BJ (cell line): ENCODE measurements at regions of chr21 and their contacts with region 1.

Region 1: GRCh38 chr21:29372063-29372802 is 73.5 kb downstream of the BACH1 start:
- DNase-seq: no peak
- H3K4me3 ChIP-seq: no peak overlapping the region
- H3K27me3 ChIP-seq: no peaks in the 10 kb centered on the region
- CTCF ChIP-seq: peak; percentile 59

Region 2: DNA sequence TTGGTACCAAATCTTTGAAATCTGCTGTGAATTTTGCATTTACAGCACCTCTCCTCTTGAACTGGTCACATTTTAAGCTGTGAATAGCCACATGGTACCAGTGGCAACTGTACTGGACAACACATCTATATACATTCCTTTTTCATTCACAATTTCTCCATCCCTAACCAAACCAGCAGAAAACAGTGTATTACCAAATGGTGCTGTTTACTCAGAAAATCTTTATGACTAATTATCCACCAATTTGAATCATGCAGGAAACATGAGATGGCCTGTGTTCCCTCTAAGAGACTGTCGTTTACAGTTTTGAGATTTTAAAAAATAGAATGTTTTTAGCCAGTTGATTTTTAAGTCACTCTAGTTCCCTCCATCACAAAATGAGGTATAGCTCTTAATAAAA is 281.2 kb before region 1 on chr21:
- CTCF ChIA-PET with region 1: interaction called, 26 read pairs
- POLR2A ChIA-PET with region 1: no interaction called
- DNase-seq: peak; percentile 61
- H3K4me3 ChIP-seq: no peak overlapping the region
- H3K27me3 ChIP-seq: no peaks in the 10 kb centered on the region
- CTCF ChIP-seq: no peak

Region 3: DNA sequence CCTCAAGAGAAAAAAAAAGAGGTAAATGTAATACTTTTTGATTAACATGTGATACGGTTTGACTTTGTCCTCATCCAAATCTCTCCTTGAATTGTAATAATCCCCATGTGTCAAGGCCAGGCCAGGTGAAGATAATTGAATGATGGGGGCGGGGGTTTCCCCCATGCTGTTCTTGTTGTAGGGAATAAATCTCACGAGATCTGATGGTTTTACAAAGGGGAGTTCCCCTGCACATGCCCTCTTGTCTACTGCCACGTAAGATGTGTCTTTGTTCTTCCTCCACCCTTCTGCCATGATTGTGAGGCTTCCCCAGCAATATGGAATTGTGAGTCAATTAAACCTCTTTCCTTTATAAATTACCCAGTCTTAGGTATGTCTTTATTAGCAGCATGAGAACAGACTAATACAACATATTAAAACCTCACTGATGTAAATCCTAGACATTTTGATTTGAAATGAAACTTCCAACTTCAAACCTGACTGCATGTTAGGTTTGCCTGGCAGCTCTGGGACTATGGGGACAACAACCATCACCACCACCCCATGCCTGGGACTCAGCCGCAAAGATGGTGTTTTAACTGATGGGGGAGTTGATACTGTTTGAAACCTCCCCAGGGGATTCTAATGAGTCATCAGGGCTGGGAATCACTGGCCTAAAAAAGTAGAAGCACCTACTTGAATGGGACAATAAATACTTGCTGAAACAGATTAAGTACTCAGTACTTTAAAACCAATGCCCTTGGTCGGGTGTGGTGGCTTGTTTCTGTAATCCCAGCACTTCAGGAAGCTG is 106.3 kb before region 1 on chr21:
- CTCF ChIA-PET with region 1: no interaction called
- POLR2A ChIA-PET with region 1: no interaction called
- DNase-seq: no peak
- H3K4me3 ChIP-seq: no peak overlapping the region
- H3K27me3 ChIP-seq: no peaks in the 10 kb centered on the region
- CTCF ChIP-seq: no peak

Region 4: GRCh38 chr21:29298348-29299045 is 73.7 kb before region 1 on chr21 and contains the start of gene BACH1:
- CTCF ChIA-PET with region 1: interaction called, 12 read pairs
- POLR2A ChIA-PET with region 1: no interaction called
- DNase-seq: no peak
- H3K4me3 ChIP-seq: peak within 1 kb of the TSS; percentile 91
- H3K27me3 ChIP-seq: no peaks in the 10 kb centered on the region
- CTCF ChIP-seq: 0 out of 2 replicates have a peak, but pooled peaks have one; percentile 7
- polyA plus RNA-seq, gene BACH1: 22.7 and 37.7 TPM in 2 replicates

Region 5: DNA sequence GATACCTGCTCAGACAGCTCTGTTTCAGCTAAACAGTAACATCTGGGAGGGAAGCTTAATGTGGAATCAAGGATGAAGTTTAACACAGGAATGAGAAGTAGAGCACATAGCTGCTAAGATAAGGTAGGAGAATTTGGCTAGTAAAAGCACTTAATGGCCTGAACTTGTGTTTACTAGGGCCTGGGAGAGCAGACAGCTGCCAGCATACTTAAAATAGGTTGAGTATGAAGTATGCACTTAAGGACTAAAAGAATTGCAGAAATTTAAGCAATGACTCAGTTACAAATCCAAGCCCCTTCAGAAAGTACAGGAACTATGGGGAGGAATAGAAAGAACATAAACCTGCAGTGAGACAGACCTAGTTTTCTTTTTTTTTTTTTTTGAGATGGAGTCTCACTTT is 20.5 kb before region 1 on chr21:
- CTCF ChIA-PET with region 1: interaction called, 14 read pairs
- POLR2A ChIA-PET with region 1: no interaction called
- DNase-seq: peak; percentile 87
- H3K4me3 ChIP-seq: no peak overlapping the region
- H3K27me3 ChIP-seq: no peaks in the 10 kb centered on the region
- CTCF ChIP-seq: no peak

Region 6: GRCh38 chr21:29360799-29361765 is 11.2 kb before region 1 on chr21:
- CTCF ChIA-PET with region 1: interaction called, 20 read pairs
- POLR2A ChIA-PET with region 1: no interaction called
- DNase-seq: no peak
- H3K4me3 ChIP-seq: no peak overlapping the region
- H3K27me3 ChIP-seq: no peaks in the 10 kb centered on the region
- CTCF ChIP-seq: no peak

Region 7: GRCh38 chr21:29386820-29387219 is 14.6 kb after region 1 on chr21:
- CTCF ChIA-PET with region 1: no interaction called
- POLR2A ChIA-PET with region 1: no interaction called
- DNase-seq: no peak
- H3K4me3 ChIP-seq: no peak overlapping the region
- H3K27me3 ChIP-seq: no peaks in the 10 kb centered on the region
- CTCF ChIP-seq: no peak

Region 8: DNA sequence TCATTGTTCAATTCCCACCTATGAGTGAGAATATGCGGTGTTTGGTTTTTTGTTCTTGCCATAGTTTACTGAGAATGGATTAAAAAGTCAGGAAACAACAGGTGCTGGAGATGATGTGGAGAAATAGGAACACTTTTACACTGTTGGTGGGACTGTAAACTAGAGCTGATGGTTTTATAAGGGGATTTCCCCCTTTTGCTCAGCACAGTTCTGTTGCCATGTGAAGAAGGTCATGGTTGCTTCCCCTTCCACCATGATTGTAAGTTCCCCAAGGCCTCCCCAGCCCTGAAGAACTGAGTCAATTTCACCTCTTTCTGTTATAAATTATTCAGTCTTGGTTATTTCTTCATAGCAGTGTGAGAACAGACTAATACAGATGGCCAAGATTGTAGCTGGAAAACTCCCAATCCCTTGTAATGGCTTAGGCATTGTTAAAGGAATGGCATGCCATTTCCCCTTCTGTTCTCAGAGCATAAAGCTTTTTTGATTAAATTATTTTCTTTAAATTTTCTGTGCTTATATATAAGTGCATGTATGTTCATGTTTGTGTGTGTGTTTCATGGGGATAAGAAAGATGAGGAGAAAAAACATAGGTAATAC is 71.3 kb after region 1 on chr21:
- CTCF ChIA-PET with region 1: no interaction called
- POLR2A ChIA-PET with region 1: no interaction called
- DNase-seq: peak; percentile 4
- H3K4me3 ChIP-seq: no peak overlapping the region
- H3K27me3 ChIP-seq: no peaks in the 10 kb centered on the region
- CTCF ChIP-seq: no peak